ENCODE measurements at regions of chr14 and their contacts with region 1.

Region 1: GRCh38 chr14:22852940-22853767 is 16.8 kb downstream of the MMP14 start:
- DNase-seq: peak; percentile 91
- ATAC-seq: peak; percentile 95
- H3K4me3 ChIP-seq: peak overlapping the region; percentile 49 to 72 (median 63)
- H3K4me3 Mint-ChIP-seq: peak overlapping the region; percentile 88
- H3K27ac ChIP-seq: peak overlapping the region in 1 of 2 donors; percentile 42
- H3K27ac Mint-ChIP-seq: peak overlapping the region; percentile 85
- H3K4me1 ChIP-seq: peaks cover 0 to 8% of the 10 kb centered on the region in 2 donors
- H3K4me1 Mint-ChIP-seq: peaks cover 6% of the 10 kb centered on the region
- H3K27me3 ChIP-seq: peaks cover 0 to 5% (median 0%) of the 10 kb centered on the region in 4 experiments
- H3K27me3 Mint-ChIP-seq: peaks cover 6% of the 10 kb centered on the region
- CTCF ChIP-seq: peak; percentile 87

Region 2: DNA sequence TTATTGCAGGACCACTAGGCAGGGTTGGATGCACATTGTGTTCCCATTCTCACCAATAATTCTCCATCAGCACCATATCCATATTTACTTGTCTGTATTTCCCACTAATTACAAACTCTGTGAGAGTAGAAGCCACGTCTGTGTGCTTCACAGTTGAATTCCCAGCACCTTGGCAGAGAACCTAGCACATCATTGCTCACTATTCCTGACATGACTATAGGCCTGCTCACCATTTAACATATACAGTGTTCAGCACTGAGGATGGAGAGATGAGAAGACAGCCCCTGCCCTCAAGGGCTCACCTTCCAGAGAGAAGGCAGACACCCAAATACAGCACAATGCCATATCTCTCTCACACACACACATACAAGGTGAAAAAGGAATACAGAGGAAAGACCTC is 269.2 kb before region 1 on chr14:
- CTCF ChIA-PET with region 1: interaction called, 25 read pairs
- POLR2A ChIA-PET with region 1: no interaction called
- intact Hi-C with region 1: no loop called
- DNase-seq: no peak
- ATAC-seq: no peak
- H3K4me3 ChIP-seq: no peak overlapping the region
- H3K4me3 Mint-ChIP-seq: no peak overlapping the region
- H3K27ac ChIP-seq: peak overlapping the region in 1 of 2 donors; percentile 45
- H3K27ac Mint-ChIP-seq: peak overlapping the region; percentile 3
- H3K4me1 ChIP-seq: peaks cover 25 to 29% of the 10 kb centered on the region in 2 donors
- H3K4me1 Mint-ChIP-seq: peaks cover 58% of the 10 kb centered on the region
- H3K27me3 ChIP-seq: no peaks in the 10 kb centered on the region
- H3K27me3 Mint-ChIP-seq: no peaks in the 10 kb centered on the region
- CTCF ChIP-seq: no peak

Region 3: GRCh38 chr14:22653012-22653621 is 200.0 kb before region 1 on chr14:
- CTCF ChIA-PET with region 1: interaction called, 74 read pairs
- POLR2A ChIA-PET with region 1: no interaction called
- intact Hi-C with region 1: loop called (anchors 1 kb)
- DNase-seq: peak; percentile 55
- ATAC-seq: peak; percentile 60
- H3K4me3 ChIP-seq: no peak overlapping the region
- H3K4me3 Mint-ChIP-seq: no peak overlapping the region
- H3K27ac ChIP-seq: no peak overlapping the region
- H3K27ac Mint-ChIP-seq: no peak overlapping the region
- H3K4me1 ChIP-seq: no peaks in the 10 kb centered on the region
- H3K4me1 Mint-ChIP-seq: no peaks in the 10 kb centered on the region
- H3K27me3 ChIP-seq: peaks cover 0 to 3% (median 0%) of the 10 kb centered on the region in 4 experiments
- H3K27me3 Mint-ChIP-seq: no peaks in the 10 kb centered on the region
- CTCF ChIP-seq: peak; percentile 73

Region 4: GRCh38 chr14:22766456-22767322 is 86.5 kb before region 1 on chr14 and contains the start of gene OXA1L:
- CTCF ChIA-PET with region 1: interaction called, 43 read pairs
- POLR2A ChIA-PET with region 1: interaction called, 4 read pairs
- intact Hi-C with region 1: loop called (anchors 1 kb)
- DNase-seq: peak; percentile 98
- ATAC-seq: peak; percentile 93
- H3K4me3 ChIP-seq: peak within 1 kb of the TSS; percentile 83 to 95 (median 92)
- H3K4me3 Mint-ChIP-seq: peak within 1 kb of the TSS; percentile 84
- H3K27ac ChIP-seq: peak within 1 kb of the TSS; percentile 84 to 89
- H3K27ac Mint-ChIP-seq: peak within 1 kb of the TSS; percentile 93
- H3K4me1 ChIP-seq: peaks cover 18 to 23% of the 10 kb centered on the region in 2 donors
- H3K4me1 Mint-ChIP-seq: peaks cover 34% of the 10 kb centered on the region
- H3K27me3 ChIP-seq: no peaks in the 10 kb centered on the region
- H3K27me3 Mint-ChIP-seq: no peaks in the 10 kb centered on the region
- CTCF ChIP-seq: no peak
- total RNA-seq, gene OXA1L: 186 and 201 TPM in 2 replicates

Region 5: DNA sequence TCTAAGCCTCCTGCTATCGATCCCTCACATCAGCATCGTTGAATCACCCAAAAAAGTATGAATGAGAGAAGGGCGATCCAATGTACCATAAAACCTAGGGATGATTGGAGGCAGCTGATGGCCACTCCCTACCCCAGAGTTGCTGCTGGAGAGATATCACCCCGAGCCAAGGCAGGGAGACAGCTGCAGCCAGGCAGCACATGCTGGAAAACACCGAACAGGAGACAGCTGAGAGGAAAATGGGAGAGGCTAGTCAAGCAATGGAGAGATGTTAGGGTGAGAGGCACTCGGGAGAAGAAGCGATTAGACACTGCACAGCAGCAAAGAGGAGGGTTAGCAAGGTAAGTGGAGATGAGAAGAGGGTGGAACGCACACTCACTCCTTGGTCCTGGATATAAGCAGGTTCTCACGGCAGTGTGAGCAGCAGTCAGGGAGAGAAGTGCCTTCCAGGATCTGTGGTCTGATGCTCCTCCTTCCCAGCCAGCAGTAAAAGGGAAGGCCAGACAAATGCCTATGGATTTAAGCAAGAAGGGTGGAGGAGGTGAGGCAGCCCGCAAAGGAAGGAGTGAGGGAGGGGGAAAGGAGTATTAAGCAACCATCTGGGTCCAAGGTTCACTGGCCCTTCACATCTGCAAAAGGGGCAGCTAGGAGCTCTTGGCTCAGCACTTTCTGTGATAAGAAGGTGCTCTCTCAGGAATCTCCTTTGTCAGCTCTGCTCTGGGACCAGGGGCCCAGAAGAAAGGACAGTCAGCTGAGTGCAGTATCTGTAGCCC is 38.0 kb before region 1 on chr14 and contains the start of gene SLC7A7:
- CTCF ChIA-PET with region 1: interaction called, 207 read pairs
- POLR2A ChIA-PET with region 1: no interaction called
- intact Hi-C with region 1: no loop called
- DNase-seq: no peak
- ATAC-seq: no peak
- H3K4me3 ChIP-seq: peak within 1 kb of the TSS in 4 of 5 experiments; percentile 3 to 39 (median 13)
- H3K4me3 Mint-ChIP-seq: peak within 1 kb of the TSS; percentile 66
- H3K27ac ChIP-seq: peak within 1 kb of the TSS; percentile 63 to 71
- H3K27ac Mint-ChIP-seq: peak within 1 kb of the TSS; percentile 92
- H3K4me1 ChIP-seq: peaks cover 54 to 64% of the 10 kb centered on the region in 2 donors
- H3K4me1 Mint-ChIP-seq: peaks cover 73% of the 10 kb centered on the region
- H3K27me3 ChIP-seq: no peaks in the 10 kb centered on the region
- H3K27me3 Mint-ChIP-seq: no peaks in the 10 kb centered on the region
- CTCF ChIP-seq: no peak
- total RNA-seq, gene SLC7A7: 50.0 and 59.5 TPM in 2 replicates

Region 6: DNA sequence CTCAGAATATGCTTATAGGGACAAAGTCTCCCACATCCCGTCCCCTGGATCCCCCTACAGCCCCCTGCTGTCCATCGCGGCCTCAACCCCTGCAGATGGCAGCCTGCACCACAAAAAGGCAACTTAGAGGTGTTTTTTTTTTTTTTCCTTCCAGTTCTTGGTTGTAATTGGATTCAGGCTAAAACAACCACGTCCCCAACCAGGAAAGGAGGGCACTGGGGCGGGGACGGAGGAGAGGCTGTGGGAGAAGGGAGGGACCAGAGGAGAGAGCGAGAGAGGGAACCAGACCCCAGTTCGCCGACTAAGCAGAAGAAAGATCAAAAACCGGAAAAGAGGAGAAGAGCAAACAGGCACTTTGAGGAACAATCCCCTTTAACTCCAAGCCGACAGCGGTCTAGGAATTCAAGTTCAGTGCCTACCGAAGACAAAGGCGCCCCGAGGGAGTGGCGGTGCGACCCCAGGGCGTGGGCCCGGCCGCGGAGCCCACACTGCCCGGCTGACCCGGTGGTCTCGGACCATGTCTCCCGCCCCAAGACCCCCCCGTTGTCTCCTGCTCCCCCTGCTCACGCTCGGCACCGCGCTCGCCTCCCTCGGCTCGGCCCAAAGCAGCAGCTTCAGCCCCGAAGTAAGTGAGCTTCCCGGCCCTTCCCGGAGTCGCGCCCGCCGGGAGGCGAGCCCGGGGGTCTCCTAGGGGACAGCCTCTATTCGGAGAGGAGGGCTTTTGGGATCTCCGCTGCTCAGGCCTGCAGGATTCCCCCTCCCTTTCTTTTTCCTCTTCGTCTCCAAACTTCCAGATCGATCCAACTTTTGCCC is 16.6 kb before region 1 on chr14 and contains the start of gene MMP14:
- CTCF ChIA-PET with region 1: interaction called, 90 read pairs
- POLR2A ChIA-PET with region 1: interaction called, 3 read pairs
- intact Hi-C with region 1: no loop called
- DNase-seq: no peak
- ATAC-seq: peak; percentile 36
- H3K4me3 ChIP-seq: peak within 1 kb of the TSS; percentile 30 to 66 (median 62)
- H3K4me3 Mint-ChIP-seq: peak within 1 kb of the TSS; percentile 96
- H3K27ac ChIP-seq: no peak within 1 kb of the TSS
- H3K27ac Mint-ChIP-seq: peak within 1 kb of the TSS; percentile 94
- H3K4me1 ChIP-seq: peaks cover 18 to 22% of the 10 kb centered on the region in 2 donors
- H3K4me1 Mint-ChIP-seq: peaks cover 23% of the 10 kb centered on the region
- H3K27me3 ChIP-seq: peaks cover 0 to 29% (median 11%) of the 10 kb centered on the region in 4 experiments
- H3K27me3 Mint-ChIP-seq: peaks cover 4% of the 10 kb centered on the region
- CTCF ChIP-seq: no peak
- total RNA-seq, gene MMP14: 3.5 and 5.2 TPM in 2 replicates

Region 7: GRCh38 chr14:22900081-22900799 is 47.1 kb after region 1 on chr14:
- CTCF ChIA-PET with region 1: interaction called, 54 read pairs
- POLR2A ChIA-PET with region 1: no interaction called
- intact Hi-C with region 1: loop called (anchors 1 kb)
- DNase-seq: peak; percentile 81
- ATAC-seq: peak; percentile 76
- H3K4me3 ChIP-seq: no peak overlapping the region
- H3K4me3 Mint-ChIP-seq: no peak overlapping the region
- H3K27ac ChIP-seq: peak overlapping the region in 1 of 2 donors; percentile 38
- H3K27ac Mint-ChIP-seq: peak overlapping the region; percentile 10
- H3K4me1 ChIP-seq: peaks cover 3 to 6% of the 10 kb centered on the region in 2 donors
- H3K4me1 Mint-ChIP-seq: peaks cover 7% of the 10 kb centered on the region
- H3K27me3 ChIP-seq: no peaks in the 10 kb centered on the region
- H3K27me3 Mint-ChIP-seq: no peaks in the 10 kb centered on the region
- CTCF ChIP-seq: peak; percentile 71

Region 8: GRCh38 chr14:23120541-23121251 is 267.5 kb after region 1 on chr14:
- CTCF ChIA-PET with region 1: no interaction called
- POLR2A ChIA-PET with region 1: no interaction called
- intact Hi-C with region 1: no loop called
- DNase-seq: peak; percentile 89
- ATAC-seq: peak; percentile 95
- H3K4me3 ChIP-seq: peak overlapping the region in 4 of 5 experiments; percentile 27 to 36 (median 30)
- H3K4me3 Mint-ChIP-seq: peak overlapping the region; percentile 79
- H3K27ac ChIP-seq: peak overlapping the region; percentile 72 to 88
- H3K27ac Mint-ChIP-seq: peak overlapping the region; percentile 89
- H3K4me1 ChIP-seq: peaks cover 32 to 35% of the 10 kb centered on the region in 2 donors
- H3K4me1 Mint-ChIP-seq: peaks cover 34% of the 10 kb centered on the region
- H3K27me3 ChIP-seq: no peaks in the 10 kb centered on the region
- H3K27me3 Mint-ChIP-seq: peaks cover 7% of the 10 kb centered on the region
- CTCF ChIP-seq: peak; percentile 99

Measured in B cell (primary cell).